ENCODE measurements at regions of chr10 and their contacts with region 1.

Region 1: DNA sequence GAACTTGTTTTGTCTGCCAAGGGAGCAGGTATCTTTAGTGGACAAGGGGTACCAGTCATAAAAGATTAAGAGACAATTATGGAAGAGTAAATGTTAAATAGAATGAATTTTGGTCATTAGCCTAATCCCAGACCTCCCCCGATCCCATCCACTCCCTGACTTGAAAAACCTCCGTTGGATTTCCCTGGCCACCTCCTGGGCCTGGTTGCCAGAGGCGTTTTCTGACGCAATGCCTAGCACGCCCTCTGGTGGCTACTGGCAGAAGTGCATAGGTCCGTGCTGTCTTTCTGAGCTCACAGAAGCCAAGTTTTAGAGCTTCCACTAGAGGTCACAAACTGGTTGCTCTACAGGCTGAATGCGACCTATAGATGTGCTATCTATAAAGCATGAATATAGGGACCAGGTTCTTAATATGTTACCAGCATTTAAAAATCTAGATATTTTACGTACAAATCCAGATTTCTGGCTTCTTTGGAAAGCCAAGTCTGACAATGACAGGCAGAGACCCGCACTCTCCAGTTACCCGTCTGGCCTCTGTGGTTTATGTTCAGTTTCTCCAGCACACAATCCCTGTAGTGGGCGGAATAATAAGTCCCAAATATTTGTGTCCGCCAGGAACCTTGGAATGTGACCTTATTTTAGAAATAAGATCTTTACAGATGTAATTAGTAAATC is 39.8 kb downstream of the SPOCK2 start:
- DNase-seq: peak; percentile 94 to 97
- H3K4me3 ChIP-seq: no peak overlapping the region
- H3K4me3 Mint-ChIP-seq: no peak overlapping the region
- H3K27ac Mint-ChIP-seq: peak overlapping the region; percentile 82
- H3K4me1 ChIP-seq: peaks cover 24% of the 10 kb centered on the region
- H3K4me1 Mint-ChIP-seq: peaks cover 20% of the 10 kb centered on the region
- H3K27me3 ChIP-seq: no peaks in the 10 kb centered on the region
- H3K27me3 Mint-ChIP-seq: no peaks in the 10 kb centered on the region
- CTCF ChIP-seq: peak; percentile 99 to 100

Region 2: GRCh38 chr10:71664585-71664984 is 384.0 kb before region 1 on chr10:
- CTCF ChIA-PET with region 1: interaction called, 12 read pairs
- POLR2A ChIA-PET with region 1: no interaction called
- intact Hi-C with region 1: no loop called
- DNase-seq: no peak
- H3K4me3 ChIP-seq: no peak overlapping the region
- H3K4me3 Mint-ChIP-seq: no peak overlapping the region
- H3K27ac Mint-ChIP-seq: no peak overlapping the region
- H3K4me1 ChIP-seq: no peaks in the 10 kb centered on the region
- H3K4me1 Mint-ChIP-seq: peaks cover 7% of the 10 kb centered on the region
- H3K27me3 ChIP-seq: no peaks in the 10 kb centered on the region
- H3K27me3 Mint-ChIP-seq: peaks cover 3% of the 10 kb centered on the region
- CTCF ChIP-seq: no peak

Region 3: GRCh38 chr10:71957546-71958275 is 90.9 kb before region 1 on chr10:
- CTCF ChIA-PET with region 1: interaction called, 28 read pairs
- POLR2A ChIA-PET with region 1: no interaction called
- intact Hi-C with region 1: loop called (anchors 1 kb)
- DNase-seq: peak in 1 of 2 experiments; percentile 7
- H3K4me3 ChIP-seq: no peak overlapping the region
- H3K4me3 Mint-ChIP-seq: no peak overlapping the region
- H3K27ac Mint-ChIP-seq: peak overlapping the region; percentile 56
- H3K4me1 ChIP-seq: peaks cover 43% of the 10 kb centered on the region
- H3K4me1 Mint-ChIP-seq: peaks cover 35% of the 10 kb centered on the region
- H3K27me3 ChIP-seq: no peaks in the 10 kb centered on the region
- H3K27me3 Mint-ChIP-seq: no peaks in the 10 kb centered on the region
- CTCF ChIP-seq: no peak

Region 4: GRCh38 chr10:71995887-71996575 is 52.6 kb before region 1 on chr10:
- CTCF ChIA-PET with region 1: interaction called, 12 read pairs
- POLR2A ChIA-PET with region 1: no interaction called
- intact Hi-C with region 1: no loop called
- DNase-seq: no peak
- H3K4me3 ChIP-seq: no peak overlapping the region
- H3K4me3 Mint-ChIP-seq: no peak overlapping the region
- H3K27ac Mint-ChIP-seq: no peak overlapping the region
- H3K4me1 ChIP-seq: no peaks in the 10 kb centered on the region
- H3K4me1 Mint-ChIP-seq: peaks cover 19% of the 10 kb centered on the region
- H3K27me3 ChIP-seq: no peaks in the 10 kb centered on the region
- H3K27me3 Mint-ChIP-seq: no peaks in the 10 kb centered on the region
- CTCF ChIP-seq: no peak

Region 5: DNA sequence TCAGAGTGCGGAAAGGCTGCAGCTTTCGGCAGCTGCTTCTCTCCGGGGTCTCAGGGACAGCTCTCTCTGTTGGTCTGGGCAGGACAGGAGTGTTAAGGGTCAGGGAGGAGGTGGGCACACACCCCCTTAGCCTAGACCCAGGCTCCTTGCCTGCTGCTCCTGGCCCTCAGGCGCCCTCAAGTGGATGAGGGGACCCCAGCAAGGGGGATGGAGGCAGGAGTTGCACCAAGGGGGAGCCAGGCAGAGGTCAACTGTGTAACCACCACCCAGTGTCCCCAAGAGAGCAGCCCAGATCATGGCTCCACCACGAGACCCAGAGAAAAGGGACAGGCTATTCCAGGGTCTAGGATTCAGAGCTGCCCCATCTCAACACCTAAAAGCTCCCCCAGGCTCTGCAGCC is 12.9 kb after region 1 on chr10:
- CTCF ChIA-PET with region 1: interaction called, 20 read pairs
- POLR2A ChIA-PET with region 1: interaction called, 3 read pairs
- intact Hi-C with region 1: no loop called
- DNase-seq: peak in 1 of 2 experiments; percentile 61
- H3K4me3 ChIP-seq: no peak overlapping the region
- H3K4me3 Mint-ChIP-seq: no peak overlapping the region
- H3K27ac Mint-ChIP-seq: no peak overlapping the region
- H3K4me1 ChIP-seq: 0 out of 2 replicates have a peak, but pooled peaks cover 3% of the 10 kb centered on the region
- H3K4me1 Mint-ChIP-seq: no peaks in the 10 kb centered on the region
- H3K27me3 ChIP-seq: no peaks in the 10 kb centered on the region
- H3K27me3 Mint-ChIP-seq: no peaks in the 10 kb centered on the region
- CTCF ChIP-seq: peak; percentile 46 to 68

Region 6: GRCh38 chr10:72126184-72126871 is 77.7 kb after region 1 on chr10:
- CTCF ChIA-PET with region 1: interaction called, 13 read pairs
- POLR2A ChIA-PET with region 1: no interaction called
- intact Hi-C with region 1: no loop called
- DNase-seq: peak in 1 of 2 experiments; percentile 49
- H3K4me3 ChIP-seq: no peak overlapping the region
- H3K4me3 Mint-ChIP-seq: no peak overlapping the region
- H3K27ac Mint-ChIP-seq: no peak overlapping the region
- H3K4me1 ChIP-seq: peaks cover 7% of the 10 kb centered on the region; the same call in 1 of the 2 replicates
- H3K4me1 Mint-ChIP-seq: peaks cover 13% of the 10 kb centered on the region
- H3K27me3 ChIP-seq: no peaks in the 10 kb centered on the region
- H3K27me3 Mint-ChIP-seq: no peaks in the 10 kb centered on the region
- CTCF ChIP-seq: peak; percentile 60 to 69

Region 7: DNA sequence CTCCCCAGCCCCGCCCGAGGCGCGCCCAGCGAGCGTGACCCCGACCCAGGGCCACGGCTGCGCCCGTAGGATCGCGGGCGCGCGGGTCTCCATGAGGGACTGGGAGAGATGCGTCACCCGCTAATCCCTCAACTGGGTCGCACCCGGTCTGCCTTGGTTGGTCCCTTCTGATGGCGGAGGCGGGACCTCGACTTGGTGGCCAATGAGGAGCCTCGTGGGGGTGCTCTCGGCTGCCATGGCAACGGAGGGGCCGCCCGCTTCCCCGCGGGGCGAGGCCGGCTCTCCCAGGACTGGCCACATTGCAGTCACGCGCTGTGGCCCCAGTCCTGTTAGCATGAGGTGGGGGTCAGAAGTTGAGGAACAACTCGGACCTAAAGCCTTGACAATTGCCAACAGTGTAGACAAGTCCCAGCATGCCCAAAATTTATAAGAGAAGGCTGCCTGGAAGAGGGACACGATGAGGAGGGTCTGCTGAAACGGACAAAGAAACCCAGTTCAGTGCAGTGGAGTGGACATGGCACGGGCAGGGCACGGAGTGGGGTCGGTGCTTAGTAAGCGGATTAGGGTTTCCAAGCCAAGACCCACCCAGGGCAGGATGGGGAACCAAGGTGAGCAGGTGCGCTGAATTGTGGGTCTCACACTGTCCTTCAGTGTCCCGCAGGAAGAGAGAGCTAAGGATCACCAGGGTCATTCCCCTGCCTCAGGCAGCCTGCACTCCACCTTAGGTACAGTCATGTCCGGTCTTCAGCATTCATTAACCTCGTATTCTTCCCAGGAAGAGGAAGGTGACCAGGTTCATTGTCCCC is 249.6 kb after region 1 on chr10:
- CTCF ChIA-PET with region 1: no interaction called
- POLR2A ChIA-PET with region 1: no interaction called
- intact Hi-C with region 1: no loop called
- DNase-seq: peak; percentile 99
- H3K4me3 ChIP-seq: peak overlapping the region; percentile 55
- H3K4me3 Mint-ChIP-seq: peak overlapping the region; percentile 86
- H3K27ac Mint-ChIP-seq: peak overlapping the region; percentile 99
- H3K4me1 ChIP-seq: peaks cover 20% of the 10 kb centered on the region
- H3K4me1 Mint-ChIP-seq: peaks cover 20% of the 10 kb centered on the region
- H3K27me3 ChIP-seq: no peaks in the 10 kb centered on the region
- H3K27me3 Mint-ChIP-seq: no peaks in the 10 kb centered on the region
- CTCF ChIP-seq: no peak